Thyroid gland (tissue), 4 donors: ENCODE measurements at regions of chr15 and their contacts with region 1.

Region 1: GRCh38 chr15:80152180-80152845 is 486 bp upstream of the FAH start:
- DNase-seq: peak; percentile 98
- H3K4me3 ChIP-seq: peak overlapping the region in 2 of 3 donors; percentile 6 to 57
- H3K27ac ChIP-seq: peak overlapping the region; percentile 64 to 88 (median 83)
- H3K4me1 ChIP-seq: peaks cover 26 to 42% of the 10 kb centered on the region in 2 donors
- H3K27me3 ChIP-seq: no peaks in the 10 kb centered on the region
- CTCF ChIP-seq: no peak
- POLR2A ChIP-seq: peak in 1 of 2 donors; percentile 55

Region 2: DNA sequence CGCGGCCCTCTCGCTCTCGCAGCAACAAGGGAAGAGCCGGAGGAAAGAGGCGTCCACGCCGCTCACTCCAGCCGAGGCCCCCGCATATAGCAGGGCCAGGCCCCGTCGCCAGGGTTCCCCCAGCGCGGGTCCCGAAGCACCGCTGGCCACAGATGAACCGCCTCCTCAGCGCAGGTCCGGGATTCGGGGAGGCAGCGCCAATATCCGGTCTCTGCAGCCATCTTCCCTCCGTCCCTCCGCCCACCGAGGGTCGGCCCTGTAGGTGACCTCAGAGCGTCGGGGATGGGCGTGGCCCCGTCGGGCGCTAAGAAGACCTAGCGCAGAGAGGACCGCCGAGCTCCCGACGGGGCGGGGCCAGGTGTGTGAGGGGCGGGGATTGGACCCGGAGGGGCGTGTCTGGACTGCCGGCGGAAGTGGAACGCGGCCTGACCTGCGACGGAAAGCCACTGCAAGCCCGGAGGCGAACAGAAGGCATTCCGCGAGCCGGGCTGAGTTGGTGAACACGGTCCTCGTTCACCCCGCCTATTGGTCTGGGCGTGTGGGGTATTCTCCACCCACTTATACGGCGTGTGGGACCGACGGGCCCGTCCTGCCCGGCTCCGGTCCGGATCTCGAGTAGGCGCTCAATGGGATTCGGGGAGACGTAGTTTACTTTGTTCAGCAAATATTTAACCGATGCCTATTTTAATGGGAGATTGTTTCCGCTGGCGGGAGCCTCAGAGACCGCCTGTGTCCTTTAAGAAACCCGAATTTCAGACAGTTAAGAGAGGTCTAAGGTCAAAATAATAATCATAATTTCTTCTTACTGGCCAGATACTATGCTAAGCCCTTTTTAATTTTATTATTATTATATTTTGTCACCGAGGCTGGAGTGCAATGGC is 228.6 kb before region 1 on chr15:
- intact Hi-C with region 1: loop called (anchors 10 kb)
- DNase-seq: peak; percentile 96
- H3K4me3 ChIP-seq: peak overlapping the region; percentile 90 to 99 (median 95)
- H3K27ac ChIP-seq: peak overlapping the region; percentile 75 to 95 (median 94)
- H3K4me1 ChIP-seq: peaks cover 4 to 8% of the 10 kb centered on the region in 2 donors
- H3K27me3 ChIP-seq: no peaks in the 10 kb centered on the region
- CTCF ChIP-seq: no peak
- POLR2A ChIP-seq: peak; percentile 79 to 95